Endothelial cell of umbilical vein (primary cell): ENCODE measurements at regions of chr2 and their contacts with region 1.

Region 1: DNA sequence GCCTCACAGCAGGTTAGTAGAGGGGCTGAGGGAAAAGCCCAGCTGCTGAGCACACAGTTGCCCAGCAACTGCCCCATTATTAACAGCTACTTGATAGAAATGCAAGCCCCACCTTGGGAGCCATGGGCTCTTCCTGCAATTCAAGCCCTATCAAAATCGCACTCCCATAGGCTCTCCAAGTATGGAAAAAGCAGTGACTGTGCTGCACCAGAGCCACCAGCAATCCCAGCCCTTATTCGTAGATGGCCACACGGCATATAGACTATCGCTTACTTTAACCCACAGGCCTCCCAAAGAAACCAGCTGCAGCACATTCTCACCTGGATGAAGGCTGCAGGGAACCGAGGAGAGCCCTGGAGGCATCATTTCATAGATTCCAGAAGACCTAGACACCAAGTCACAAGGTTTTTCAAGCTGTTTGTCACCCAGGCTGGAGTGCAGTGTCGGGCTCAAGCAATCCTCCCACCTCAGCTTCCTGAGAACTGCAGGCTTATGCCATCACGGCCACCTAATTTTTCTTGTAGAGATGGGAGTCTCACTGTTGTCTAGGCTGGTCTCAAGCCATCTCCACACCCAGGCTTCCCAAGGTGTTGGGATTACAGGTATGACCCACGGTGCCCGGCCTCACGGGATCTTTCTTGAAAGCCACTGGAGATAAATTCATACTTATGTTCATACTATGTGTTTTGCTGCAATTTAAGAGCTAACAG is 11.3 kb downstream of the NCL start:
- DNase-seq: no peak
- H3K4me3 ChIP-seq: no peak overlapping the region
- H3K27ac ChIP-seq: no peak overlapping the region
- H3K4me1 ChIP-seq: peaks cover 8% of the 10 kb centered on the region
- H3K27me3 ChIP-seq: no peaks in the 10 kb centered on the region
- CTCF ChIP-seq: no peak
- POLR2A ChIP-seq: peak; percentile 57

Region 2: DNA sequence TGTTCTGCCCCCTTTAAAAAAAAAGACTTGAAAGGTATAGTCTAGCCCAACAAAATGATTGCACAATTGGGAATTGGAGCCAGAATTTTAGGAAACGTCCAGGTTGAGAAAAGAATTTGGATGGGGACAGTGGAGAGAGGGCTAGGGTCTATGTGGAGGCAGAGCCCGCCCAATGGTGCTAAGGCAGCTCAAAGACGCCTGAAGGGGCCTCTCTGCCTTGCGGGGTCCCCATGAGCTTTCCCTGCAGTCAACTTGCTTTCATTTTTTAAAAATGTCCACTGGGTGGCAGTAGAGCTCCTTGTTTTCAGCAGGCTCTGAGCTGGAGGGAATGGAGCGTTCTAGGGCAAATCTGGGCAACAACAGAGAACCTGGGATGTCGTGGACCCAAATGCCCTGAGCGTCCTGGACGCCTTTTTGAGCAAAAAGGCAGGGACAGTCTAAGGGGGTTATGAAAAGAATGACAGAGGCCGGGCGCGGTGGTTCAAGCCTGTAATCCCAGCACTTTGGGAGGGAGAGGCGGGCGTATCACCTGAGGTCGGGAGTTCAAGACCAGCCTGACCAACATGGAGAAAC is 628.5 kb before region 1 on chr2:
- CTCF ChIA-PET with region 1: interaction called, 18 read pairs
- POLR2A ChIA-PET with region 1: no interaction called
- dilution Hi-C with region 1: no loop called
- intact Hi-C with region 1: no loop called
- DNase-seq: peak; percentile 71
- H3K4me3 ChIP-seq: no peak overlapping the region
- H3K27ac ChIP-seq: no peak overlapping the region
- H3K4me1 ChIP-seq: no peaks in the 10 kb centered on the region
- H3K27me3 ChIP-seq: peaks cover 6 to 20% of the 10 kb centered on the region in 2 experiments
- CTCF ChIP-seq: peak; percentile 59 to 60
- POLR2A ChIP-seq: no peak

Region 3: GRCh38 chr2:231110551-231110950 is 342.4 kb before region 1 on chr2:
- CTCF ChIA-PET with region 1: interaction called, 24 read pairs
- POLR2A ChIA-PET with region 1: no interaction called
- dilution Hi-C with region 1: no loop called
- intact Hi-C with region 1: no loop called
- DNase-seq: peak; percentile 84
- H3K4me3 ChIP-seq: no peak overlapping the region
- H3K27ac ChIP-seq: no peak overlapping the region
- H3K4me1 ChIP-seq: peaks cover 12% of the 10 kb centered on the region
- H3K27me3 ChIP-seq: no peaks in the 10 kb centered on the region
- CTCF ChIP-seq: peak; percentile 15 to 30
- POLR2A ChIP-seq: no peak

Region 4: DNA sequence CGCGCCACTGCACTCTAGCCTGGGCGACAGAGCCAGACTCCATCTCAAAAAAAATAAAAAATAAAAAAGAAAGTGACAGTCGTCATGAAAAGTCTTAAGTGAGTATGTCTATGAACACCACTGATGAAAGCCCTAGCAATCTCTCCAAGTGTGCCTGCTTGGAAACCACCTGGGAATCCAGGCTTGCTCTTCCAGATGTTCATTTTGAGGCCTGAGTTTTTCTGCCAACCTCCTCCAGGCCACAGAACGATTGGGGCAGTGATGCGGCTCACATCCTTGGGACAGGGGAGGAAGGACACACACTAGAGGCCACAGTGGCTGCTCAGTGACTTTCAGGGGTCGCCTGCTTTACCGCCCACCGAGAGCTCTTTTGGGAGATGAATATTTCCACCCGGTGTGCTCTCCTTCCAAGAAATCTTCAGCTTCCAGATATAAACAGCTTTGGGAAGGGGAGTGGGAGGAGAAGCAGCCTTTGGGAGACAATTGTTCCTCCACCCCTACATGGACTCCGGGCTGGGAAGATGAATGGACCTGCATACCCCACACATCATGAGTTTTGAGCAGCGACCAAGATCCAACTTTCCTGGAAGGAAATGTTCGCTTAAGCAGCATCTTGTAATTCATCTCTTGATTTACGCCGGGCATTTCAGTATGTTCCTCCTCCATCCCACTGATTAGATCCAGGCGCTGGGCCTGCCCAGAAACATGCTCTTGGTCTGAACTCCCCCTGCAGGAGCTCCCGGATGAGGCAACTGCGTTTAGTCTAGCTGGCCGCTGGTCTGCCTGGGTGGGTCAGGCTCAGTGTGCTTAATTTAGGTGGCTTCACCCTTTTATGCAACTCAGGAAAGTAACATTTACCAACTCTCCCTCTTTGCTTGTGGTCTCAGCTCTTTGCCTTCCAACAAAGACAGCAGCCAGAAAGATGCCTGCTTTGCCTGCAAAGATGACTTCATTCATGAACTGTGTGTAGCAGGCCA is 260.8 kb before region 1 on chr2:
- CTCF ChIA-PET with region 1: interaction called, 10 read pairs
- POLR2A ChIA-PET with region 1: no interaction called
- dilution Hi-C with region 1: no loop called
- intact Hi-C with region 1: no loop called
- DNase-seq: peak; percentile 77
- H3K4me3 ChIP-seq: no peak overlapping the region
- H3K27ac ChIP-seq: peak overlapping the region; percentile 47
- H3K4me1 ChIP-seq: peaks cover 24% of the 10 kb centered on the region
- H3K27me3 ChIP-seq: no peaks in the 10 kb centered on the region
- CTCF ChIP-seq: peak; percentile 79 to 88
- POLR2A ChIP-seq: no peak

Region 5: GRCh38 chr2:231245253-231246094 is 207.5 kb before region 1 on chr2:
- CTCF ChIA-PET with region 1: interaction called, 11 read pairs
- POLR2A ChIA-PET with region 1: interaction called, 6 read pairs
- dilution Hi-C with region 1: no loop called
- intact Hi-C with region 1: no loop called
- DNase-seq: peak; percentile 7
- H3K4me3 ChIP-seq: no peak overlapping the region
- H3K27ac ChIP-seq: no peak overlapping the region
- H3K4me1 ChIP-seq: no peaks in the 10 kb centered on the region
- H3K27me3 ChIP-seq: no peaks in the 10 kb centered on the region
- CTCF ChIP-seq: peak in 1 of 2 donors; percentile 6
- POLR2A ChIP-seq: no peak

Region 6: DNA sequence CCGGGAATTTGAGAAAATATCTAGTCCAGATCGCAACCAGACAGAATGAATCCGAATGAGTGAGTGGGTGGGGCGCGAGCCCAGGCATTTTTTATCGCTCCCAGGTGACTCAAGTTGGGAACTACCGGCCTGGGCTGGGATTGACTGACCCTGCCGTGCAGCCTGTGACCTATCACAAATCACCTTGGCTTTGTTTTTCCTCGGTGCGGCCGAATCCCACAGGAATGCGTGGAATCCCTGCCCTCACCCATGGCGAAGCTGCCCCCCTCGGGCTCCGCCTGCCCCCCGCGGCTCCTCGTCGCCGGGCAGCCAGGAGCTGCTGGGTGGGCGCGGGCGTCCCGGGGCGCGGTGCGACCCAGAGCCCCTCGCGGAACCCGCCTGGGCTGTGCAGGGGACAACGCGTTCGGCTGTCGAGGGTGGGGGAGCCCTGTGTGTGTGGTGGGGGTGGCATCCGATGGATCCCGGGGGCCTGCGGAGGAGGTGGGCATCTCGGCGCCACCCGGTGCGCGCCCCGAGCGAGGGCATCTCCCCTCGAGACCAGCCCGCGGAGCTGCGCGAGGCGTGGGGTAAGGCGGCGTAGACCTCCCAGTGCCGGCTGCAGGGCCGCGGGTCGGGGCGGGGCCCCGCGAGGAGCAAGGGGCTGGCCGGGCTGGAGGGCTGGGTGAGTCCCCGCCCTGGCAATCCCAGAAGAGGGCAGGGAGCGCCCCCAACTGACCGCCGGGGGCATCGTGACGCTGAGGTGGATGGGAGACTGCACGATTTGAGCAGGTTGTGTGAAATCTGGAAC is 40.9 kb before region 1 on chr2:
- CTCF ChIA-PET with region 1: interaction called, 35 read pairs
- POLR2A ChIA-PET with region 1: no interaction called
- dilution Hi-C with region 1: no loop called
- intact Hi-C with region 1: no loop called
- DNase-seq: peak; percentile 81
- H3K4me3 ChIP-seq: peak overlapping the region; percentile 18 to 73 (median 21)
- H3K27ac ChIP-seq: no peak overlapping the region
- H3K4me1 ChIP-seq: peaks cover 3% of the 10 kb centered on the region
- H3K27me3 ChIP-seq: no peaks in the 10 kb centered on the region
- CTCF ChIP-seq: peak; percentile 91 to 97
- POLR2A ChIP-seq: no peak

Region 7: GRCh38 chr2:231463698-231464575 is 11.0 kb after region 1 on chr2 and contains the start of gene NCL:
- CTCF ChIA-PET with region 1: interaction called, 53 read pairs
- POLR2A ChIA-PET with region 1: interaction called, 50 read pairs
- dilution Hi-C with region 1: no loop called
- intact Hi-C with region 1: no loop called
- DNase-seq: peak; percentile 99
- H3K4me3 ChIP-seq: peak within 1 kb of the TSS; percentile 93 to 99 (median 96)
- H3K27ac ChIP-seq: peak within 1 kb of the TSS; percentile 79
- H3K4me1 ChIP-seq: peaks cover 20% of the 10 kb centered on the region
- H3K27me3 ChIP-seq: no peaks in the 10 kb centered on the region
- CTCF ChIP-seq: no peak
- POLR2A ChIP-seq: peak; percentile 99
- total RNA-seq, gene NCL: 701 and 708 TPM in 2 replicates